OCI-LY7 (cell line): ENCODE measurements at regions of chr17 and their contacts with region 1.

Region 1: GRCh38 chr17:29116804-29117772 is 63.1 kb downstream of the MYO18A start:
- DNase-seq: peak; percentile 70
- H3K4me3 ChIP-seq: no peak overlapping the region
- H3K27ac ChIP-seq: no peak overlapping the region
- H3K4me1 ChIP-seq: no peaks in the 10 kb centered on the region
- CTCF ChIP-seq: peak; percentile 93

Region 2: GRCh38 chr17:28598799-28599310 is 518.2 kb before region 1 on chr17 and contains the start of gene SPAG5:
- CTCF ChIA-PET with region 1: no interaction called
- POLR2A ChIA-PET with region 1: no interaction called
- intact Hi-C with region 1: no loop called
- DNase-seq: peak; percentile 96
- H3K4me3 ChIP-seq: peak within 1 kb of the TSS; percentile 82
- H3K27ac ChIP-seq: peak within 1 kb of the TSS; percentile 73
- H3K4me1 ChIP-seq: peaks cover 23% of the 10 kb centered on the region
- CTCF ChIP-seq: no peak
- total RNA-seq, gene SPAG5: 161 and 163 TPM in 2 replicates

Region 3: DNA sequence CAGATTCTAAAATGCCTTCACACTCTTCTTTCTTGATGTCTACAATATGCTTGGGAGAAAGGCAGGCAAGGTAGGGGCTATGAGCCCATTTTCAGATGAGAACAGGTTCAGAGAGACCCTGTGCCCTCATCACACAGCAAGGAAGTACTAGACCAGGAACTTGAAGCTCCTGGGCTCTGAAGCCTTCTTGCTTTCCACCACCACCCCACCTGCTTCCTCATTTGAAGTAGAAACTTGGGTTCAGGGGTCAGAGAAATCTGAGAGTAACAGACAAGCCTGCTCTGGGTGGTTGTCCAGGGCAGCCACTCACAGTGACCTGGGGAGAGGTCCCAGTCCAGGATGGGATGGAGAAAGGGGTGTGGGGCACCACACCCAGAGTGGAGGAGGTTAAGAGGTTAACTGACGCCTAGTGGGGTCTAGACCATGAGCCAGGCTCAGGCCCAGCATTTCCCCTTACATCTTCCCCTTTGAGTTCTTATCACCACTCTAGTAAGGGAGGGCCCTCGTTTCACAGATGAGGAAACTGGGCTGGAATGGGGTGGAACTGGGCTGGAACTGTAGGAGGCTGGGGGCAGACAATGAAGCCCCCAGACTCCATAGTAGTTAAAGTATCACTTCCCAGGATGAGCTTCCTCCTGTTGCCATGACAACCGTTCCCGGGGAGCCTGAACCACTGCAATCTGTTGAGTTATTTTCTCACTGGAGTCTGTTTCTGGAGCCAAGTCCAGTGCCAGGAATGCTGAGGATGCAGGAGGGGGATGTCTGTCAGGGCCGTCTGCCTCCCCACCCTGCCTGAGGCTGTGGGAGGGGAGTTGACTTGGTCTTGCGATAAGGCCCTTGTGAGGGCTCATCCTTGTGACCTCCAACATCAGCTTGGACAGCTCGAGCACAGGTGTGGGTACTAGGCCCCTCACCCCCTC is 149.6 kb before region 1 on chr17:
- CTCF ChIA-PET with region 1: interaction called, 16 read pairs
- POLR2A ChIA-PET with region 1: interaction called, 5 read pairs
- intact Hi-C with region 1: loop called (anchors 1 kb)
- DNase-seq: peak; percentile 46
- H3K4me3 ChIP-seq: no peak overlapping the region
- H3K27ac ChIP-seq: no peak overlapping the region
- H3K4me1 ChIP-seq: peaks cover 15% of the 10 kb centered on the region
- CTCF ChIP-seq: no peak